ENCODE measurements at regions of chr4 and their contacts with region 1.

Region 1: DNA sequence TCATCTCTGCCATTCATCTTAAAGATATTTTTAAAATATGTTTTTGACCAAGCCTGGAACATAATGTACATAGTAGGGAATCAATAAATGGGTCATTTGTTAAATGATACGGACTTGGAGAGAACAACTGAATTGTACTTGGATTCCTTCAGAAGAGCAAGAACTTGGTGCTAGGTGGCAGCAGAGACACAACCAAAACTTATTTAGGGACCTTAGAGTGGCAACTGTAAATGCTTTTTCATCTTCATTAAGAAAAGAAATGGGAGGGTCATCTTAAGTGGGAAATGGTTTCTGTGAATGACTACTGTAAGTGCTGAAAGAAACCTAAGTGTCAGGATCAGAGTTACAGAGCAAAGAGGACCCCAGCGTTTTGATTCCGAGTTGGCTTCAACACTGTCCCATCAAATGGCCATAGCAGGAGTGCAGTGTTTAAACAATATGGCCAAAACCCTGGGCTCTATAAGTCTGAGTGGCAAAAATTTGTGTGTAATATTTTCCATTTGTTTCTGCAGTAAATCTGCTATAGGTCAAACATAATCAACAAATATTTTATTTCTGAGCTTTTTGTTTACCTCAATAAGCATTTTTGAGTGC is 213.6 kb downstream of the PALLD start:
- DNase-seq: peak; percentile 35
- H3K4me3 Mint-ChIP-seq: no peak overlapping the region
- H3K27ac Mint-ChIP-seq: no peak overlapping the region
- H3K4me1 Mint-ChIP-seq: peaks cover 10% of the 10 kb centered on the region
- H3K27me3 Mint-ChIP-seq: no peaks in the 10 kb centered on the region

Region 2: DNA sequence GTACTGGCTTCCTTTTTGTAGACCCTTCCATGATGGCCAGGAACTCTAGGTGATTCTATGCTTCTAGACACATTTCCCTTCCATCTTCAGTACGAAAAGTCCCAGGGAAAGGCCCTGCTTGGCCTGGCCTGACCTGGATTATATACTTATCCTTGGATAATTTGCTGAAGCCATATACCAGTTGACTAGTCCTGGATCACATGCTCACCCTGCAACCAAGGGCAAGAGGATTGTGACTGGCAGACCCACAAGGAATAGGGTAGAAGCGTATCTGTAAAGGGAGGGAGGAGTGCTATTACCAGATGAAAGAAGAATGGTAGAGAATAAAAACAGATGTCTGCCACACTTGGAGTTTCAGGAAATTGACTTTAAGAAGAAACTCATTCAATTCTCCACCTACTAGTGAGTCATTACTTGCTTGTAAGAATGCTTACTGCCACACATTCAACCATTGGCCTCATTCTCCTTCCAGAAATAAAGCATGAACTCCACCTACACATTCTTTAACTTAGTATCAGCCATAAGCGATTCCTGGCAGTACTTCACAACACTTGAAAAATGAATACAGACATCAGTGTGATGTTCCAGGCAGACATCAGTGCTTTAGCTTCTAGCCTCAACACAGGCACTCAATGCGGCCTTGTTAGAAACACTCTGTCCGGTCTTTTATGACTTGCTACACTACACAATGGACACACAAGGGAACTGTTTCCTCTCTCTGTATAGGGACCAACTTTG is 157.8 kb after region 1 on chr4:
- CTCF ChIA-PET with region 1: no interaction called
- intact Hi-C with region 1: loop called (anchors 1 kb)
- DNase-seq: no peak
- H3K4me3 Mint-ChIP-seq: no peak overlapping the region
- H3K27ac Mint-ChIP-seq: peak overlapping the region; percentile 77
- H3K4me1 Mint-ChIP-seq: peaks cover 6% of the 10 kb centered on the region
- H3K27me3 Mint-ChIP-seq: peaks cover 17% of the 10 kb centered on the region

Region 3: DNA sequence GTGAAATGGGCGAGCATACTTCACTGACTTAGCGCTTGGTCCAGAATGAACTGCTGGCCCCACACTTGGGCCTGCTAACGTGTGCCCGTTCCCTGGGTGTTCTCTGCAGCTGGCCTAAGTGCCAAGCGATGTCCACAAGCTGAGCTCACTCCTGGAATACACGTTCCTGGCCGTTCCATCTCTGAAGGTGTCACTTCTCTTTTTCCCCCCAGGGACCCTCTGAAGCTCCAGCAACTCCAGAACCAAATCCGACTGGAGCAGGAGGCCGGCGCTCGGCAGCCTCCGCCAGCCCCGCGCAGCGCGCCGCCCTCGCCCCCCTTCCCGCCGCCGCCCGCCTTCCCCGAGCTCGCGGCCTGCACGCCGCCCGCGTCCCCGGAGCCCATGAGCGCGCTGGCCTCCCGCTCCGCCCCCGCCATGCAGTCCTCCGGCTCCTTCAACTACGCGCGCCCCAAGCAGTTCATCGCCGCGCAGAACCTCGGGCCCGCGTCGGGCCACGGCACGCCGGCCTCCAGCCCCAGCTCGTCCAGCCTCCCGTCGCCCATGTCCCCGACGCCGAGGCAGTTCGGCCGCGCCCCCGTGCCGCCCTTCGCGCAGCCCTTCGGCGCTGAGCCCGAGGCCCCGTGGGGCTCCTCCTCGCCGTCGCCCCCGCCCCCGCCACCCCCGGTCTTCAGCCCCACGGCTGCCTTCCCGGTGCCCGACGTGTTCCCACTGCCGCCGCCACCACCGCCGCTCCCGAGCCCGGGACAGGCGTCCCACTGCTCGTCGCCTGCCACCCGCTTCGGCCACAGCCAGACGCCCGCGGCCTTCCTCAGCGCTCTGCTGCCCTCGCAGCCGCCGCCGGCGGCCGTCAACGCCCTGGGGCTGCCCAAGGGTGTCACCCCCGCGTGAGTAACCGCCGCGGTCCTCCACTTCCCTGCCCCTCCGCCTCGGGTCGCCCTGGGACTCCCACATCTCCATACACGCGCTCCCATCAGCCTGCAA is 167.4 kb after region 1 on chr4:
- CTCF ChIA-PET with region 1: no interaction called
- intact Hi-C with region 1: loop called (anchors 2 kb)
- DNase-seq: peak; percentile 22
- H3K4me3 Mint-ChIP-seq: peak overlapping the region; percentile 70
- H3K27ac Mint-ChIP-seq: no peak overlapping the region
- H3K4me1 Mint-ChIP-seq: peaks cover 6% of the 10 kb centered on the region
- H3K27me3 Mint-ChIP-seq: peaks cover 71% of the 10 kb centered on the region

Region 4: GRCh38 chr4:168917138-168917779 is 206.8 kb after region 1 on chr4:
- CTCF ChIA-PET with region 1: no interaction called
- intact Hi-C with region 1: loop called (anchors 1 kb)
- DNase-seq: no peak
- H3K4me3 Mint-ChIP-seq: no peak overlapping the region
- H3K27ac Mint-ChIP-seq: no peak overlapping the region
- H3K4me1 Mint-ChIP-seq: no peaks in the 10 kb centered on the region
- H3K27me3 Mint-ChIP-seq: no peaks in the 10 kb centered on the region